ENCODE measurements at regions of chr19 and their contacts with region 1.

Region 1: DNA sequence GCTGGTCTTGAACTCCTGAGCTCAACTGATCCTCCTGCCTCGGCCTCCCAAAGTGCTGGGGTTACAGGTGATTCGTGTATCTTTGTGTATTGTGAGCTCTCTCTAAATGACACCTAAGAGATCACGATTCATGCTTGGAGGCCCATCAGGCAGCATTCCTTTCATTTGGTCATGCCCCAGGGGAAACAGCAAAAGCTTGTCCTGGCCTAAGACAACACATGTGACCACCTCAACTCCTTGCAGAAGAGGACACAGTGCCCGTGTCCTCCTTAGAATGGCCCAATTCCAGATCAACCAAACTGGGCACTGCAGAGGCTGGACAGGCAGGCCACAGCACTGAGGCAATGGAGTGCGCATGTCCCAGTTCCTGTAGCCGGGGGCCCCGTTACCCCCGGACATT is 32.5 kb downstream of the ZC3H4 start:
- DNase-seq: no peak
- H3K4me3 Mint-ChIP-seq: no peak overlapping the region
- H3K27ac Mint-ChIP-seq: peak overlapping the region; percentile 49
- H3K4me1 Mint-ChIP-seq: no peaks in the 10 kb centered on the region
- H3K27me3 Mint-ChIP-seq: no peaks in the 10 kb centered on the region

Region 2: GRCh38 chr19:47094557-47095475 is 13.7 kb after region 1 on chr19:
- CTCF ChIA-PET with region 1: interaction called, 26 read pairs
- POLR2A ChIA-PET with region 1: interaction called, 7 read pairs
- intact Hi-C with region 1: no loop called
- DNase-seq: peak; percentile 83
- H3K4me3 Mint-ChIP-seq: peak overlapping the region; percentile 77
- H3K27ac Mint-ChIP-seq: peak overlapping the region; percentile 98
- H3K4me1 Mint-ChIP-seq: peaks cover 66% of the 10 kb centered on the region
- H3K27me3 Mint-ChIP-seq: no peaks in the 10 kb centered on the region

Region 3: GRCh38 chr19:47124937-47125668 is 44.0 kb after region 1 on chr19:
- CTCF ChIA-PET with region 1: interaction called, 82 read pairs
- POLR2A ChIA-PET with region 1: no interaction called
- intact Hi-C with region 1: loop called (anchors 1 kb)
- DNase-seq: no peak
- H3K4me3 Mint-ChIP-seq: no peak overlapping the region
- H3K27ac Mint-ChIP-seq: peak overlapping the region; percentile 21
- H3K4me1 Mint-ChIP-seq: peaks cover 2% of the 10 kb centered on the region
- H3K27me3 Mint-ChIP-seq: no peaks in the 10 kb centered on the region